Heart right ventricle (tissue), 16 donors: ENCODE measurements at regions of chr10 and their contacts with region 1.

Region 1: GRCh38 chr10:61943674-61944410 is 42.3 kb downstream of the ARID5B start:
- DNase-seq: no peak
- ATAC-seq: peak in 6 of 8 donors; percentile 57 to 77 (median 72)
- H3K4me3 ChIP-seq: peak overlapping the region in 5 of 10 donors; percentile 6 to 29 (median 13)
- H3K27ac ChIP-seq: peak overlapping the region in 9 of 10 donors; percentile 23 to 88 (median 64)
- H3K4me1 ChIP-seq: peaks cover 0 to 67% (median 18%) of the 10 kb centered on the region in 9 donors
- H3K27me3 ChIP-seq: no peaks in the 10 kb centered on the region
- CTCF ChIP-seq: peak in 5 of 9 donors; percentile 8 to 48 (median 33)

Region 2: GRCh38 chr10:61974601-61975390 is 31.0 kb after region 1 on chr10:
- intact Hi-C with region 1: loop called in 1 of 10 experiments (anchors 2 kb)
- DNase-seq: peak; percentile 33 to 72
- ATAC-seq: peak in 6 of 8 donors; percentile 64 to 80 (median 72)
- H3K4me3 ChIP-seq: peak overlapping the region in 1 of 10 donors; percentile 1
- H3K27ac ChIP-seq: peak overlapping the region in 9 of 10 donors; percentile 43 to 73 (median 59)
- H3K4me1 ChIP-seq: peaks cover 9 to 71% (median 52%) of the 10 kb centered on the region in 9 donors
- H3K27me3 ChIP-seq: no peaks in the 10 kb centered on the region
- CTCF ChIP-seq: no peak

Region 3: DNA sequence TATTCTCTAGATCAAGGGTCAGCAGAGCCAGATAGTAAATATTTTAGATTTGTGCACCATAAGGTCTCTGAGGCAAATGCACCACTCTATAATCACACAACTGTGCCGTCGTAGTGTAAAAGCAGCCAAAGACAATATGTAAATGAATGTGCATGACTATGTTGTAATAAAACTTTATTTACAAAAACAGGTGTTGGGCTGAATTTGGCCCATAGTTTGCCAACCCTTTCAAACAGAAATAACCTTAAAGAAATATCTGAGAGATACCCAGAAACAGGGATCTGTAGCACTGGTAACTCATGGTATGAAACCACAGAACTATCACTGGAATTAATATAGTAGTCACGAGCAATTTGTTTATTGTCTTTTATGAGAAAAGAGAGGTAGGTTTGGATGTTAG is 43.7 kb after region 1 on chr10:
- intact Hi-C with region 1: no loop called
- DNase-seq: no peak
- ATAC-seq: no peak
- H3K4me3 ChIP-seq: peak overlapping the region in 1 of 10 donors; percentile 9
- H3K27ac ChIP-seq: peak overlapping the region in 9 of 10 donors; percentile 4 to 73 (median 54)
- H3K4me1 ChIP-seq: peaks cover 0 to 56% (median 31%) of the 10 kb centered on the region in 9 donors
- H3K27me3 ChIP-seq: no peaks in the 10 kb centered on the region
- CTCF ChIP-seq: no peak

Region 4: DNA sequence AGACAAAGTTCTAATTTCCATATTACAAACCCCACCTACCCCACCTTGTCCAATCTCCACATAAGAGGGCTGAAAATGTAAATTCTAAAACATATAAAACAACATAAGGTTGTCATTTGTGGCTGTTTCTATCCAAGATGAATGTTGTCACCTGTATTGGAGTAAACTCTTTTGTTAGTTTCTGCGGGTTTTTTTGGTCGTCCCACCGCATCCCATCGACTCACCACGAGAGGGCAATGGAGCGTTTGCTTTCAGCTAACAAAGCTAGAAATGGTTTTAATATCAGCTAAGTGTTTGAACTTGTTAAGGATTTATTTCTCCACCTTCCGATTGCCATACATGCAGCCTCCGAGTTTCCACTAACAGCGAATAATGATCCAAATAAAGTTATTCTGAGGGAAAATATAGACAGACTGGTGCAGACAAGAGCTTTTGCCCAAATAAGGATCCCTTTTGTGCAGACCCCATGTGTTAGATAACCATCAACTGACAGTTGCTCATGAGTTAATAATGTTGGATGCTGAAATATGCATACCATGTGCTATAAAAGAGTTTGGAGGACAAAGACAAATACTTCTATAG is 94.9 kb after region 1 on chr10:
- intact Hi-C with region 1: no loop called
- DNase-seq: peak; percentile 63 to 86
- ATAC-seq: peak; percentile 53 to 78 (median 71)
- H3K4me3 ChIP-seq: peak overlapping the region in 8 of 10 donors; percentile 7 to 46 (median 26)
- H3K27ac ChIP-seq: peak overlapping the region in 5 of 10 donors; percentile 7 to 29 (median 24)
- H3K4me1 ChIP-seq: peaks cover 0 to 45% (median 36%) of the 10 kb centered on the region in 9 donors
- H3K27me3 ChIP-seq: no peaks in the 10 kb centered on the region
- CTCF ChIP-seq: peak; percentile 78 to 95 (median 86)

Region 5: GRCh38 chr10:62050893-62051433 is 107.1 kb after region 1 on chr10:
- intact Hi-C with region 1: no loop called
- DNase-seq: peak; percentile 31 to 83
- ATAC-seq: peak; percentile 48 to 85 (median 78)
- H3K4me3 ChIP-seq: peak overlapping the region in 9 of 10 donors; percentile 42 to 68 (median 59)
- H3K27ac ChIP-seq: peak overlapping the region; percentile 88 to 98 (median 94)
- H3K4me1 ChIP-seq: peaks cover 16 to 91% (median 77%) of the 10 kb centered on the region in 9 donors
- H3K27me3 ChIP-seq: no peaks in the 10 kb centered on the region
- CTCF ChIP-seq: no peak

Region 6: DNA sequence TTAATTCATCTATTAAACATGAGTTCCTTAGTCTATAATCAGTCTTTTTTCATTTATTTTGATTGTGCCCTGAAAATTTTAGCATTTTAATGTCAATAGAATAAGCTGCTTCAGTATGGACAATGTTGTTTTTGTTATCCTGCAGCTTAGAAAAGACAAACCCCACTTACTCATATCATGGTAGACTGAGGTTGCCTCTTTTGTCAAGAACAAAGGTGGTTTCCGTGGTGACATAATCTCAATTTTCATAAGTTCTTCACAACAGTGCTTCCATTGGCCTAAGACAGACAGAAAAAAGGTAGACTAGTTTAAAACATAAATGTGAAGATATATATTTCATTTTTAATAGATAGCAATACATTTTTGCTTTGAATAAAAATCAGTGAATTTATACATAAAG is 255.7 kb after region 1 on chr10:
- intact Hi-C with region 1: no loop called
- DNase-seq: no peak
- ATAC-seq: no peak
- H3K4me3 ChIP-seq: no peak overlapping the region
- H3K27ac ChIP-seq: no peak overlapping the region
- H3K4me1 ChIP-seq: peaks cover 0 to 3% (median 0%) of the 10 kb centered on the region in 9 donors
- H3K27me3 ChIP-seq: no peaks in the 10 kb centered on the region
- CTCF ChIP-seq: no peak